Heart right ventricle (tissue), 16 donors: ENCODE measurements at regions of chr14 and their contacts with region 1.

Region 1: GRCh38 chr14:93206793-93207467 is at the starts of genes GON7 and UBR7:
- DNase-seq: peak; percentile 94 to 97
- ATAC-seq: peak; percentile 98 to 99 (median 99)
- H3K4me3 ChIP-seq: peak within 1 kb of the TSS; percentile 58 to 98 (median 85)
- H3K27ac ChIP-seq: peak within 1 kb of the TSS; percentile 38 to 93 (median 89)
- H3K4me1 ChIP-seq: peaks cover 0 to 44% (median 27%) of the 10 kb centered on the region in 9 donors
- H3K27me3 ChIP-seq: no peaks in the 10 kb centered on the region
- CTCF ChIP-seq: peak in 6 of 9 donors; percentile 21 to 54 (median 42)
- total RNA-seq, gene GON7: 9.9 to 20.1 (median 14.3) TPM
- total RNA-seq, gene UBR7: 17.7 to 28.3 (median 21.1) TPM

Region 2: DNA sequence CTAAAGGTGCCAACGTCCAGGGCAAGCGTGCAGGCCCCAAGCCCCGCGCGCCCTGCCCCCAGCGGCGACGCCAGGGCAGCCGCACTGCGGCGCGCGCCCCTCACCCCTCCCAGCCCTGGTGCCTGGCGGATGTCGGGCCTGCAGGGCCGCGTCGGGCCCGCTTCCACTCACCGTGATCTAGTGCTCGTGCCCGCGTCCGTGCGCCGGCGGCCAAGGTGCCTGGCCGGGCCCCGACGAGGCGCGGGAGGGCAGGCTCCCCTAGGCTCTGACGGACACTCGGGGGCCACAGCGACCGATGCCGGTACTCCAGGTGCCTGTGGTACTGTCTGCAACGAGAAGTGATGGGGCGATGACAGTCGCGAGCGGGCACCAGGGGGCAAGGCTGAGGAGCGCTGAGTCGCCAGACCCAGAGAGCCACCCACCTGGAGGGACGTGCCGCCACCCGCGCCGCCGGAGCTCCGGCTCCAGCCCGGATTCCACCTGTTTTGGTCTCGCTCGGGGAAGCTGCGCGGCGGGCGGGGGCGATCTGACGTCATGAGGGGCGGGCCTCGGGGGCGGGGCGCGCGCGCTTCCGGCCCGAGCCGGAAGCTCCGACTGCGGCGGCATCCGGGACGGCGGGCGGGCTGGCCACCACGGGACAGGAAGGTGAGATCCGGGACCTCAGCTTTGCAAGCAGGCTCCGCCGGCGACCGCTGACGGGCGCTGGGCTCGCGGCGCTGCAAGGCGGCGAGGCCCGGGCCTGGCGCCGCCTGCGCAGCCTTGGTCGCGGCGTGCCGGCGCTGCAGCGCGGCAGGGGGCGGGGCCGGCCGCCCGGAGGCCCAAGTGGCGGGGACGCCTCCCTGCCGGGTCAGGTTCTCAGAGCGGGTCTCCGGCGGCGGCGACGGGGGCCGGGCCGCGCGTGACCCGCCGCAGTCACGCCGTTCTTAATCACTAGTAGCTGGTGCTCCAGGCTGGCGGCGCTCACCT is 22.3 kb before region 1 on chr14 and contains the starts of genes LYSET and MOAP1:
- intact Hi-C with region 1: loop called in 3 of 10 experiments (anchors 1 to 2 kb)
- DNase-seq: peak; percentile 88 to 89
- ATAC-seq: peak; percentile 93 to 98 (median 95)
- H3K4me3 ChIP-seq: peak within 1 kb of the TSS; percentile 77 to 100 (median 92)
- H3K27ac ChIP-seq: peak within 1 kb of the TSS; percentile 85 to 98 (median 94)
- H3K4me1 ChIP-seq: peaks cover 0 to 40% (median 26%) of the 10 kb centered on the region in 9 donors
- H3K27me3 ChIP-seq: no peaks in the 10 kb centered on the region
- CTCF ChIP-seq: peak in 6 of 9 donors; percentile 4 to 41 (median 33)
- total RNA-seq, gene LYSET: 22.3 to 29.7 (median 25.7) TPM
- total RNA-seq, gene MOAP1: 47.7 to 96.1 (median 81.5) TPM

Region 3: GRCh38 chr14:93332853-93333630 is 126.1 kb after region 1 on chr14 and contains the start of gene BTBD7:
- intact Hi-C with region 1: loop called in 3 of 10 experiments (anchors 2 to 10 kb)
- DNase-seq: peak; percentile 95 to 96
- ATAC-seq: peak; percentile 98 to 100 (median 98)
- H3K4me3 ChIP-seq: peak within 1 kb of the TSS; percentile 61 to 92 (median 84)
- H3K27ac ChIP-seq: peak within 1 kb of the TSS; percentile 88 to 99 (median 98)
- H3K4me1 ChIP-seq: peaks cover 0 to 40% (median 35%) of the 10 kb centered on the region in 9 donors
- H3K27me3 ChIP-seq: no peaks in the 10 kb centered on the region
- CTCF ChIP-seq: peak in 6 of 9 donors; percentile 5 to 51 (median 24)
- total RNA-seq, gene BTBD7: 12.7 to 33.6 (median 23.7) TPM

Region 4: GRCh38 chr14:93582516-93582915 is 375.6 kb after region 1 on chr14:
- intact Hi-C with region 1: no loop called
- DNase-seq: peak; percentile 7 to 16
- ATAC-seq: peak; percentile 29 to 89 (median 68)
- H3K4me3 ChIP-seq: no peak overlapping the region
- H3K27ac ChIP-seq: no peak overlapping the region
- H3K4me1 ChIP-seq: no peaks in the 10 kb centered on the region
- H3K27me3 ChIP-seq: no peaks in the 10 kb centered on the region
- CTCF ChIP-seq: no peak

Region 5: DNA sequence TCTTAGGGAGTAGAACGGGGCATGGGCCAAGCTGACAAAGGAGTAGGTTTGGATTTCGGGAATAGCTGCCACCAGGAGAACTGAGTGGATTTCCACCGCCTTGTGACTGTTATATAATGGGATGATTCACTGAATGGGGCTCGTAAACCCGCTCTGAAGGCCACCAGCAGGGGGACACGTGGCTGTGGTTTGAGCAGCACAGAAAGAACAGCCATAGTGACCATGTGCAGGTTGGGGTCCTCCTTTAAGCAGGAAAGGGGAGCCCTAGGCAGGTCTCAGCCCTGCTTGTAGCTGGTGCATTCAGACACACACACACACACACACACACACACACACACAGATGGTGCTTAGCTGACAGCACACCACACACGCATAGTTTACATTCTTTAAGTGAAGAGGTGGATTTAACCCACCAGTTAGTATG is 778.1 kb after region 1 on chr14:
- intact Hi-C with region 1: no loop called
- DNase-seq: peak in 1 of 2 donors; percentile 50
- ATAC-seq: peak in 5 of 8 donors; percentile 7 to 38 (median 20)
- H3K4me3 ChIP-seq: no peak overlapping the region
- H3K27ac ChIP-seq: peak overlapping the region in 8 of 10 donors; percentile 31 to 92 (median 86)
- H3K4me1 ChIP-seq: peaks cover 0 to 78% (median 46%) of the 10 kb centered on the region in 9 donors
- H3K27me3 ChIP-seq: no peaks in the 10 kb centered on the region
- CTCF ChIP-seq: peak in 6 of 9 donors; percentile 11 to 52 (median 38)